ENCODE measurements at regions of chr7 and their contacts with region 1.

Region 1: DNA sequence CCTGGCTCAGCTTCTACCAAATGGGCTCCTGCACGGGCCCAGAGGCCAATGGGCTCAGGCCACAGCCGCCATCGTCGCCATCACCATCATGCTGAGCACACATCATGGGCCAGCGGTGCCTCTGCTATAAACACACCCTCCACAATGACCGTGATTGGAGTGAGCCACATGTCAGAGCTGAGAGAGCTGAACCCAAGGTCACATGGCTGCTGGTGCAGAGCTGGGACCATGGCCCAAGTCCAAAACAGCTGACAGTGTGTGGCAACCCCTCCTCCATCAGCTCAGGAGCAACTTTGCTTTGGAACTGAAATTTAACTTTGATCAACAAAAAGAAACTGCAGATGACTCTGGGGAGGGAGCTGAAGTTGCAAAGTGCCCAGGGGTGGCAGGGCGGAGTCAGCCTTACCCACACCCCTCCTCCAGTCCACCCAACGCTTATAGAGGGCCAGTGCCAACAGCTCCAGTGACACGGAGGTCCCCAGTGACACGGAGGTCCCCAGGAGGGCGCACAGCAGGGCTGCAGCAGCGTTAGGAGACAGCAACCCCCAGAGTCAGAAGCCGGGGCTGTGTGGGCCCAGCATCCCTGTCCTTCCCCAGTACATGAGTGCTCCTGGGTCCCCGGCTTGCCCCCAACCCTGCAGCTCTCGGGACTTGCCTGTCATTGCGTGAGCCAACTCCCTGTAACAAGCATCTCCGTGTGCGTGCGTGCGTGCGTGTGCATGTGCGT is 249.6 kb downstream of the ELFN1 start:
- DNase-seq: peak; percentile 22
- H3K4me3 Mint-ChIP-seq: peak overlapping the region; percentile 57
- H3K27ac Mint-ChIP-seq: no peak overlapping the region
- H3K4me1 Mint-ChIP-seq: peaks cover 61% of the 10 kb centered on the region
- H3K27me3 Mint-ChIP-seq: peaks cover 5% of the 10 kb centered on the region

Region 2: DNA sequence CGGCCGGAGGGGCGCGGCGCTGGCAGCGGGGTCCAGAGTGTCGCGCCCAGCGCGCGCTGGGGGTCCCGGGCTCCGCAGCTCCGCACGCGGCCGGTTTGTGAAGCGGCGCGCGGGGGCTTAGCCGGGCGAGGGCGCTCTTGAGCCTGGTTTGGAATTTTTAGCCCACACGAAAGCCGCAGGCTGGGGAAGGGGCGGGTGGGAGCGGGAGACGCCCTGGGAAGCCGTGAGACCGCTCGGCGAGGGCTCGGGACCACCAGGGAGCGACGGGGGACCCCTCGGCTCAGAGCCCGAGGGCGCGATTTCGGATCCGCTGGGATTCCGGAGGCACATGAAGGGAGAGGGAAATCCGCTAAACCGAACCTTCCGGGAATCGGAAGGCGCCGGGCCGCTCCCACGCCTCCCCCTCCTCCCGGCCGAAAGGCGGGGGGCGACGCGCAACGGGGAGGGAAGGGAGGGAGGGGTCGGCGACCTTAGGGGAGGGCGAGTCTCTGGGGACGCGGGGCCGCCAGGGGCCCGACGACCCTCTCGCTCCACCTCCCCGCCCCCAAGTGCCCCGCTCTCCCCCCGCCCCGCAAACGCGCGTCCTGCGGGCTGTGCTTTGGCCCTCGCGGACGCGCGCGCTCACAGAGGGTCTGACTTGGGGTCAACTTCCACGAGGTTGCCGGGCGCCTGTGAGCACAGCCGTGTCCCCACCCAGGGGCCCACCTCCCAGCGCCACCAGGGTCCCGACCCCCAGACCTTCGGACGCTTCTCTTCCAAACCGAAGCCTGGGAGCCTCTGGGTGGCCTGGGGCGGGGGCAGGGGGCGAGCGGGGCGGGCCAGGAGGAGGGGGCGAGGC is 254.8 kb before region 1 on chr7:
- CTCF ChIA-PET with region 1: no interaction called
- intact Hi-C with region 1: loop called (anchors 10 kb)
- DNase-seq: peak; percentile 74
- H3K4me3 Mint-ChIP-seq: peak overlapping the region; percentile 15
- H3K27ac Mint-ChIP-seq: no peak overlapping the region
- H3K4me1 Mint-ChIP-seq: peaks cover 13% of the 10 kb centered on the region
- H3K27me3 Mint-ChIP-seq: peaks cover 44% of the 10 kb centered on the region

Region 3: DNA sequence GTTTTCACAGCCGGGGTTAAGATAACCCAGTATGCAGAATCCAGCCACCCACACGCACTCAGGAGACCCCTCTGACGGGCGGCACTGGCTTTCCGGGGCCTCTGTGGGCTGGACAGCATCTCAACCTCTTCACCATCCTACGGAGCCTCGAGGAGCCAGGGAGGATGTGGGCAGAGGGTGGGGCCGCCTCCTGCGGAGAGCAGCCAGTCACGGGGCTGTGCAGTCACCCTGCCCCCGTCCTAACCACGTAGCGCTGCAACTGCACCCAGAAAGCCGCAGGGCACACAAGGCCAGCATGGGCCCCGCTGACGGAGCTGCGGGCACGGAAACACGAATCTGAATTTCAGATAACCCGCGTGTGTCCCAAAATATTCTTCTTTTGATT is 20.7 kb after region 1 on chr7:
- CTCF ChIA-PET with region 1: interaction called, 3 read pairs
- intact Hi-C with region 1: loop called (anchors 1 kb)
- DNase-seq: peak; percentile 95
- H3K4me3 Mint-ChIP-seq: peak overlapping the region; percentile 87
- H3K27ac Mint-ChIP-seq: peak overlapping the region; percentile 90
- H3K4me1 Mint-ChIP-seq: peaks cover 59% of the 10 kb centered on the region
- H3K27me3 Mint-ChIP-seq: no peaks in the 10 kb centered on the region

Region 4: GRCh38 chr7:1961701-1962276 is 42.1 kb after region 1 on chr7:
- CTCF ChIA-PET with region 1: no interaction called
- intact Hi-C with region 1: loop called (anchors 5 kb)
- DNase-seq: peak; percentile 76
- H3K4me3 Mint-ChIP-seq: no peak overlapping the region
- H3K27ac Mint-ChIP-seq: peak overlapping the region; percentile 88
- H3K4me1 Mint-ChIP-seq: peaks cover 9% of the 10 kb centered on the region
- H3K27me3 Mint-ChIP-seq: no peaks in the 10 kb centered on the region

Region 5: DNA sequence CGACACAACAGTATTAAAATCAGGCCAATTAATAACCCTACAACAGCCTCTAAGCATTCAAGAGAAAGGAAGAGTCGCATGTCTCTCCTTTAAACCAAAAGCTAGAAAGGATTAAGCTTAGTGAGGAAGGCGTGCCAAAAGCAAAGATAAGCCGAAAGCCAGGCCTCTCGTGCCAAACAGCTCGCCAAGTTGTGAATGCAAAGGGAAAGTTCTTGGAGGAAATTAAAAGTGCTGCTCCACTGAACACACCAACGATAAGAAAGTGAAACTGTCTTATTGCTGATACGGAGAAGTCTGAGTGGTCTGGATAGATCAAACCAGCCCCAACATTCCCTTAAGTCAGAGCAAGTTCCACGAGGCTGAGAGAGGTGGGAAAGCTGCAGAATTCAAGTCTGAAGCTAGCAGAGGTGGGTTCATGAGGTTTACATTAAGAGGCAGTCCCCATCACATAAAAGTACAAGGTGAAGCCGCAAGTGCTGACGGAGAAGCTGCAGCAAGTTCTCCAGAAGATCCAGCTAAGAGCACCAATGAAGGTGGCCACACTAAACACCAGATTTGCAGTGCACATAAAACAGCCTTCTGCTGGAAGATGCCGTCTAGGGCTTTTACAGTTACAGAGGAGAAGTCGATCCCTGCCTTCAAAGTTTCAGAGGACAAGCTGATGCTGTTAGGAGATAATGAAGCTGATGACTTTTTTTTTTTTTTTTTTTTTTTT is 118.3 kb after region 1 on chr7:
- CTCF ChIA-PET with region 1: no interaction called
- intact Hi-C with region 1: loop called (anchors 2 kb)
- DNase-seq: peak; percentile 40
- H3K4me3 Mint-ChIP-seq: peak overlapping the region; percentile 74
- H3K27ac Mint-ChIP-seq: peak overlapping the region; percentile 78
- H3K4me1 Mint-ChIP-seq: peaks cover 52% of the 10 kb centered on the region
- H3K27me3 Mint-ChIP-seq: no peaks in the 10 kb centered on the region

Region 6: GRCh38 chr7:2104107-2104710 is 184.5 kb after region 1 on chr7:
- CTCF ChIA-PET with region 1: no interaction called
- intact Hi-C with region 1: loop called (anchors 5 kb)
- DNase-seq: peak; percentile 88
- H3K4me3 Mint-ChIP-seq: peak overlapping the region; percentile 56
- H3K27ac Mint-ChIP-seq: peak overlapping the region; percentile 74
- H3K4me1 Mint-ChIP-seq: peaks cover 39% of the 10 kb centered on the region
- H3K27me3 Mint-ChIP-seq: no peaks in the 10 kb centered on the region